ENCODE measurements at regions of chr2 and their contacts with region 1.

Region 1: DNA sequence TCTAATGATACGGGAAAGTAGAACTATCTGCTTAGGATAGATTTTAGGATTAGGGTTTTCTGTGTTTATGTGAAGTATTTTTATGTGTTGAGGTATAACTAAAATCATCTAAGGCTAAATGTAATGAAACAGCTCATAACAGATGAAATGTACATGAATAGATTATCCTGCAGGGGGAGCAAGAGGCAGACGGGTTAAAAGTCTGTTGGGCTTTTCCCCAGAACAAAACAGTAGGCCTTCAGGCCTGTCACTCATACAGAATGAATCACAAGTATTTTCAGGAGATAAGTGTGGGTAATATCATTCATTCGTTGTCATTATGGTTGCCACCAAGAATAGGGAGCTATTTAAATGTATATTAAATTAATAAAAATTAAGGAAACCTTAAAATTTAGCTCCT is 107.9 kb upstream of the IL1R2 start:
- DNase-seq: peak; percentile 54
- H3K4me3 ChIP-seq: no peak overlapping the region
- H3K27ac ChIP-seq: no peak overlapping the region
- H3K4me1 ChIP-seq: peaks cover 22% of the 10 kb centered on the region
- H3K27me3 ChIP-seq: no peaks in the 10 kb centered on the region
- CTCF ChIP-seq: peak; percentile 33 to 53
- POLR2A ChIP-seq: no peak

Region 2: DNA sequence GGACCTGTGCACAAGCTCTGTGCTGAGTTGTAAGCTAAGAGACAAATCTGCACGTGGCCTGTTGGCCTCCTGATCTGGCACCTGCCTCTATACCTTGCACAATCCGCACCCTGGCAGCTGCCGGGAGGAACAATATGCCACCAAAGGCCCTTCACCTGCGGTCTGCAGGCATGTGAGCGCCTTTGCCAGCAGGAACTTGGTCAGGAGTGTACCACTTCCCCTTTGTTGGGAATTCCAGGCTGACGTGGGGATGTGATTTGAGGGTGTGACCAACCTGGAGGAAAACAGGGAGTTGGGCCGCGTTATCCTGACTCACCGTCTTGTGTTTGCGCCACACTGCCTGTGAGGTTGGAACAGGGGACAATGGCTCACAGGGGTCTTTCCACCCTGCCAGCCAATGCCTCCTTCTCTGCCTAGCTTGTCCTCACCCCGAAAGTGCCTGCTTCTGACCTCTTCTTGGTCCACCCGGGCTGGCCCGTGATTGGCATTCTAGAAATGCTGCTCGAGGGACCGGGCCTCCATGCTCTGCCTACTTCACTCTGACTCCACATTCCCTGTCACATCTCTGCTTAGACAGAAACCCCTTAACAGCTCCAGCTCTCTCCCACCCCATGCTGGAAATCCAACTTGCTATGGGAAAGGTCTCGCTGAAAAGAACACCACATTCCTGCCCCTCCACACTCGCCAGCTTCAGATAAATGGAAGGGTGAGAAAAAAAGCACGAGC is 253.5 kb before region 1 on chr2:
- CTCF ChIA-PET with region 1: no interaction called
- POLR2A ChIA-PET with region 1: no interaction called
- dilution Hi-C with region 1: no loop called
- intact Hi-C with region 1: no loop called
- DNase-seq: no peak
- H3K4me3 ChIP-seq: no peak overlapping the region
- H3K27ac ChIP-seq: no peak overlapping the region
- H3K4me1 ChIP-seq: no peaks in the 10 kb centered on the region
- H3K27me3 ChIP-seq: no peaks in the 10 kb centered on the region
- CTCF ChIP-seq: no peak
- POLR2A ChIP-seq: no peak

Region 3: GRCh38 chr2:101864426-101864825 is 19.4 kb before region 1 on chr2:
- CTCF ChIA-PET with region 1: interaction called, 10 read pairs
- POLR2A ChIA-PET with region 1: no interaction called
- dilution Hi-C with region 1: no loop called
- intact Hi-C with region 1: no loop called
- DNase-seq: peak; percentile 59
- H3K4me3 ChIP-seq: peak overlapping the region in 1 of 3 experiments; percentile 13
- H3K27ac ChIP-seq: peak overlapping the region; percentile 62
- H3K4me1 ChIP-seq: peaks cover 20% of the 10 kb centered on the region
- H3K27me3 ChIP-seq: no peaks in the 10 kb centered on the region
- CTCF ChIP-seq: no peak
- POLR2A ChIP-seq: no peak

Region 4: DNA sequence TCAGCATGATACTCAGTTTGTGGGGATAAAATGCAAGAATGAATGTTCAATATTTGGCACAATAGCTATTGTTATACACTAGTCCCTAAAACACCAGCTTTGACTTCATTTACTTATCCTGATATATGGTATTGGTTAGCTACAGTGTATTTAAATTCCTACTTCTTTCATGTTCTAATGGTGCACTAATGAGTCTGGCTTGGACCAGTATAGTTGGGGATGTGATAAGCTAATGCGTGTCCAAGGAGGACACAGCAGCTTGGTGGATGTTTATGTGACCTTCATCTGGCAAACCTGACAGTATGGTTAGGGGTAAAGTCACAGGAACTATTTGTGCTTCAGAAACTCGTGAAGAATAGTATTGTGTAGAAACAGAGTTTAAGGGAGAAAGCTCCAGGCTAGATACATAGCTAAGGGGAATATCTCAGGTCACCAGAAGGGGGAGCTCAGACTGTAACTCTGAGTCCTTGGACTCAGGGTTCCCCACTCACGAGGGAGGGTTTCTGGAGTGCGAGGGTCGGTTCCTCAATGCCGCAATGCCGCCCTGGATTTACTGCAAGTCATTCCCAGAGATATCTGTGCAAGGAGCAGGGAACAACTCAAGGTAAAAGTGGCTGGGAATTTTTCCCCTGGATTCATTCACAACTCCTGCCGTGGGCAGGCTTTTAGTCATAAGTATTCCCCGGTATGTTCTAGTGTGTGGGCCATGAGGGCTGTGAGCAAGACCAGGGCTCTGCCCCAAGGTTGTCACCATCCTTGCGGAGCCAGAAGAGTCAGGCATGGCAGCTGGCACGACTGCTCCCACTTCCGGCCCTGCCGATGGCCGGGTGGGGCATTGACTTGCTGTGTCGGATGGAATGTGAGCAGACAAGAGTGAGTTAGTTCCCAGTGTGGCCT is 122.4 kb after region 1 on chr2:
- CTCF ChIA-PET with region 1: interaction called, 16 read pairs
- POLR2A ChIA-PET with region 1: no interaction called
- dilution Hi-C with region 1: no loop called
- intact Hi-C with region 1: no loop called
- DNase-seq: peak; percentile 55
- H3K4me3 ChIP-seq: no peak overlapping the region
- H3K27ac ChIP-seq: no peak overlapping the region
- H3K4me1 ChIP-seq: peaks cover 9% of the 10 kb centered on the region
- H3K27me3 ChIP-seq: no peaks in the 10 kb centered on the region
- CTCF ChIP-seq: peak; percentile 66 to 82
- POLR2A ChIP-seq: no peak

Region 5: GRCh38 chr2:102442967-102443828 is 559.3 kb after region 1 on chr2:
- CTCF ChIA-PET with region 1: interaction called, 14 read pairs
- POLR2A ChIA-PET with region 1: no interaction called
- dilution Hi-C with region 1: no loop called
- intact Hi-C with region 1: loop called (anchors 2 kb)
- DNase-seq: peak; percentile 64
- H3K4me3 ChIP-seq: no peak overlapping the region
- H3K27ac ChIP-seq: no peak overlapping the region
- H3K4me1 ChIP-seq: no peaks in the 10 kb centered on the region
- H3K27me3 ChIP-seq: no peaks in the 10 kb centered on the region
- CTCF ChIP-seq: peak; percentile 56 to 62
- POLR2A ChIP-seq: no peak

Region 6: DNA sequence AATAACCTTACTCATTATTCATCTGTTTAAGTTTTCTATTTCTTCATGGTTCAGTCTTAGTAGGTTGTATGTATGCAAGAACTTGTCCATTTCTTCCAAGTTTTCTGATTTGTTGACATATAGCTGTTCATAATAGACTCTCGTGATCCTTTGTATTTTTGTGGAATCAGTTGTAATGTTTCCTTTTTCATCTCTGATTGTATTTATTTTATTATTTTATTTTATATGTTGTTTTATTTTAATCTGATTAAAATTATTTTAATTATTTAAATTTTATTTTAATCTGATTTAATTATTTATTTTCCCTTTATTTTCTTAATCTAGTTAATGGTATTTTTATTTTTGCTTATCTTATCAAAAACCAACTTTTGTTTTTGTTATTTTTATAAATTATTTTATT is 692.0 kb after region 1 on chr2:
- CTCF ChIA-PET with region 1: no interaction called
- POLR2A ChIA-PET with region 1: no interaction called
- dilution Hi-C with region 1: no loop called
- intact Hi-C with region 1: no loop called
- DNase-seq: no peak
- H3K4me3 ChIP-seq: no peak overlapping the region
- H3K27ac ChIP-seq: no peak overlapping the region
- H3K4me1 ChIP-seq: no peaks in the 10 kb centered on the region
- H3K27me3 ChIP-seq: peaks cover 0 to 2% of the 10 kb centered on the region in 2 experiments
- CTCF ChIP-seq: no peak
- POLR2A ChIP-seq: no peak